ENCODE measurements at regions of chr6 and their contacts with region 1.

Region 1: GRCh38 chr6:16514249-16514648 is 247.0 kb downstream of the ATXN1 start:
- DNase-seq: peak; percentile 41
- H3K4me3 Mint-ChIP-seq: no peak overlapping the region
- H3K27ac Mint-ChIP-seq: peak overlapping the region; percentile 24
- H3K4me1 Mint-ChIP-seq: peaks cover 78% of the 10 kb centered on the region
- H3K27me3 Mint-ChIP-seq: no peaks in the 10 kb centered on the region

Region 2: GRCh38 chr6:15642276-15642675 is 872.0 kb before region 1 on chr6:
- CTCF ChIA-PET with region 1: no interaction called
- POLR2A ChIA-PET with region 1: no interaction called
- DNase-seq: no peak
- H3K4me3 Mint-ChIP-seq: no peak overlapping the region
- H3K27ac Mint-ChIP-seq: no peak overlapping the region
- H3K4me1 Mint-ChIP-seq: peaks cover 10% of the 10 kb centered on the region
- H3K27me3 Mint-ChIP-seq: no peaks in the 10 kb centered on the region

Region 3: DNA sequence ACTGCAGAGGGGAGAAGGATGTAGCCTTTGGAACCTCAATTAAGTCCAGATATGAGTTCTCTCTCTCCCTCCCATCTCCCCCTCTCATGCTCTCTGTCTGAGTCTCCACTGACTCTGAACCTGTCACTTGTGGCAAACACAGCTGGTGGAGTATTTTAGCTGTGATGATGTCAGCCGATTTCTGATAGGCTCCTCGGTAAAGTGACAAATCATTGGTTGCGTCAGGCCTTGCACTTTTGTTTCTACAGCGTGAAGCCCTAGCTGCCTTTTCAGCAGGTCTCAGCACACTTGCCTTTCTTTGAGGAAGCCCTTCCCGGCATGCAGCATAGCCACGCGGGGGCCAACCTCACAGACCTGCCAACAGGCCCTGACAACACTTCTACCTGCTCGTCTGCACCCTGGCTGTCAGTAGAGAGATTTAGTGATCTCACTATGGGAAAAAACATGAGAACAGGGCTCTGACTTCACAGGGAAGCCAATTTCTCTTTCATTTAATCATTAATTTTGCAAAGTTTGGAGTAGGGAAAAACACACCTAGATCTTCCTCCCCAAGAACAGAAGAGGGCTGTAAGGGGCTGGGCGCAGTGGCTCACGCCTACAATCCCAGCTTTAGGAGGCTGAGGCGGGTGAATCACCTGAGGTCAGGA is 191.5 kb before region 1 on chr6:
- CTCF ChIA-PET with region 1: no interaction called
- POLR2A ChIA-PET with region 1: no interaction called
- DNase-seq: peak; percentile 84
- H3K4me3 Mint-ChIP-seq: peak overlapping the region; percentile 29
- H3K27ac Mint-ChIP-seq: peak overlapping the region; percentile 98
- H3K4me1 Mint-ChIP-seq: peaks cover 76% of the 10 kb centered on the region
- H3K27me3 Mint-ChIP-seq: no peaks in the 10 kb centered on the region

Region 4: GRCh38 chr6:16380220-16380809 is 133.9 kb before region 1 on chr6:
- CTCF ChIA-PET with region 1: no interaction called
- POLR2A ChIA-PET with region 1: no interaction called
- DNase-seq: no peak
- H3K4me3 Mint-ChIP-seq: no peak overlapping the region
- H3K27ac Mint-ChIP-seq: no peak overlapping the region
- H3K4me1 Mint-ChIP-seq: no peaks in the 10 kb centered on the region
- H3K27me3 Mint-ChIP-seq: no peaks in the 10 kb centered on the region

Region 5: DNA sequence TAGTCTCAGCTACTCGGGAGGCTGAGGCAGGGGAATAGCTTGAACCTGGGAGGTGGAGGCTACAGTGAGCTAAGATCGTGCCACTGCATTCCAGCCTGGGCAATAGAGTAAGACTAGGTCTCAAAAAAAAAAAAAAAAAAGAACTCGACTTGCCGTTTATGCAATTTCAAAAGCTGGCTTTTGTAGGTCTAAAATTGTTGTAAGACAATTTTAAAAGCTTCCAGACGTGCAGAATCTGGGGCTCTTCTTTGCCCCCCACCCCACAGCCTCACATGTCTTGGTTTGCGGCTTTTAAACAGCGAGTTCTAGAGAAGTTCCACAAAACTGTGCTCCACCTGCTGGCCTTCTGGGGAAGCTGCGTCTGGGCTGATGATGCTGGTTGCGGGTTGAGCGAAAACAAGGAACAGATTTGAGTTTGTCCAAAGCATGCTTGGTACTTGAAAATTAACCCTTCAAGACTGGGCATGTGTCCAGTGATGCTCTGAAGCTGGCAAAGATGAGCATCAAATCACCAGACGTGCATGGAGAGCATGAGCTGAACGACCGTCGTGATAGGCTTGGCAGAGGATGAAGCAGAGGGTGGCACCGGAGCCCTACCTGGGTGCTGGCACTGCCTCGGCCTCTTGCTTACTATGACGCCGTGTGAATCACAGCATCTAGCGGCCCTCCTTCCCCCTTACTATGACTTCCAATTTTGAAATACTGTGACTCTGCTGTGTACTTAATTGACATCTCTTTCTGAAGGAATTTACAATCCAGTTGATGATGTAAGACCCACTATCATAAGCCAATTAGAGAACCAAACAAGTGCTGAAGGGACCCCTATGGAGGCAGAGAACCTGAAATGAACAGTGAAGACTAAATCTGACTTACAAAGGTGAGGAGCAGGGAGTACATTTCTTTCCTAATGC is 104.5 kb before region 1 on chr6:
- CTCF ChIA-PET with region 1: interaction called, 12 read pairs
- POLR2A ChIA-PET with region 1: interaction called, 6 read pairs
- DNase-seq: peak; percentile 73
- H3K4me3 Mint-ChIP-seq: peak overlapping the region; percentile 63
- H3K27ac Mint-ChIP-seq: peak overlapping the region; percentile 73
- H3K4me1 Mint-ChIP-seq: peaks cover 65% of the 10 kb centered on the region
- H3K27me3 Mint-ChIP-seq: no peaks in the 10 kb centered on the region

Region 6: DNA sequence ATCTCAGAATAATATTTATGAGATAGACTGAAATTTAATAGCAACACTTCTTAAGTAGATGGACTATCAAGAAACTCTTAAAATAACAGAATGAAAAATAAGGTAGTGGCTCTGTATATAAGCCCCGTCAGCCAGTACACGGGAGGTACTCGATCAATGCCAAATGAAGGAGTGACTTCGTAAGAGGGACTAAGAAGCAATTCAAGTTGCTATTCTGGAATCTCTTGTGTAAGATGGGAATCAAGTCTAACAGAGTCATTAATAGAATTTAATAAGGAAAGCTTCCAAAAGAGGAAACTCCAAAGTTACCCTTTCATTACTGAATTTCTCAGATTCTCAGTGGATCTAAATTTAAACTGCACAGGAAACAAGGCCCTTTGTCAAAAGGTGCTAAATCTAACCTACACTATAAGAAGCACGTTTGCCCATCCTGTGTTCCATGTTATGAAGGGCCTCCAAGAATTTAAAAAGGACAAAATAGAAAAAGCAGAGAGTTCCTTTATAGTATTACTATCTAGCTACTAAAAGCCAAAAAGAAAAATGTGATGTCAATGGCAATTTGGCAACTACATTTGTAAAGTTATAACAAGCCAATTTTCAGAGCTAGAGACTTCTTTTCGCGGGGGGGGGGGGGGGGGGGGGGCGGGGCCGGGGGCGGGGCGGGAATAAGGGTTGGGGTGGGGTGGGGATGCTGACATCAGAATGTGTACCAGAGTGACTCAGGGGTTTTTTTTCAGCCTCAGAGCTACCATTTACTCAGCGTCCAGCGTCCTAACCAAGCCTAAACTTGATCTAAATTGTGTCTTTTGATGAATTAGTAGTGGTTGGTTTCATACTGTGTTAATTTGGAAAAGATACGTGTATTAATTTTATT is 75.3 kb before region 1 on chr6:
- CTCF ChIA-PET with region 1: interaction called, 25 read pairs
- POLR2A ChIA-PET with region 1: interaction called, 20 read pairs
- DNase-seq: peak; percentile 43
- H3K4me3 Mint-ChIP-seq: peak overlapping the region; percentile 90
- H3K27ac Mint-ChIP-seq: peak overlapping the region; percentile 94
- H3K4me1 Mint-ChIP-seq: peaks cover 73% of the 10 kb centered on the region
- H3K27me3 Mint-ChIP-seq: no peaks in the 10 kb centered on the region

Region 7: GRCh38 chr6:16461491-16461890 is 52.8 kb before region 1 on chr6:
- CTCF ChIA-PET with region 1: no interaction called
- POLR2A ChIA-PET with region 1: no interaction called
- DNase-seq: no peak
- H3K4me3 Mint-ChIP-seq: no peak overlapping the region
- H3K27ac Mint-ChIP-seq: no peak overlapping the region
- H3K4me1 Mint-ChIP-seq: peaks cover 10% of the 10 kb centered on the region
- H3K27me3 Mint-ChIP-seq: no peaks in the 10 kb centered on the region

Region 8: GRCh38 chr6:16487996-16488674 is 26.1 kb before region 1 on chr6:
- CTCF ChIA-PET with region 1: interaction called, 17 read pairs
- POLR2A ChIA-PET with region 1: interaction called, 18 read pairs
- DNase-seq: no peak
- H3K4me3 Mint-ChIP-seq: peak overlapping the region; percentile 27
- H3K27ac Mint-ChIP-seq: peak overlapping the region; percentile 94
- H3K4me1 Mint-ChIP-seq: peaks cover 82% of the 10 kb centered on the region
- H3K27me3 Mint-ChIP-seq: no peaks in the 10 kb centered on the region

Region 9: DNA sequence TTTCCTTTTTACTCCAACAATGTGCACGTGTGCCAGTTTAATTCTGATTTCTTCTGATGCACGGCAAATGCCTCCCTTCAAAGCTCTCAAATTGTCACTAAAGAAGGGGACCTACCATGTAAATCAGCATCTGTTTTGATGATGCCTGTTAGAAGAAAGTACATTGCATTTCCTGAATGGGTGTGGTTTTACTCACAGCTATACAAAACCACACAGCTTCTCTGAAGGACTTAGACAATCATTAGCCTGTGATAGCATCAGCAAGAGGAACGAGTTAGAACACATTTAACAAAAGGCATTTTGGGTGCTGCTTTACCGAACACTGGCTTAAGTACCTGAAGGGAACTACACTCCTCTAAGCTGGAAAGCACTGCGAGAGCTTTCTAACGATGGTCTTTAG is 137.6 kb after region 1 on chr6:
- CTCF ChIA-PET with region 1: interaction called, 12 read pairs
- POLR2A ChIA-PET with region 1: interaction called, 4 read pairs
- DNase-seq: peak; percentile 29
- H3K4me3 Mint-ChIP-seq: peak overlapping the region; percentile 52
- H3K27ac Mint-ChIP-seq: peak overlapping the region; percentile 88
- H3K4me1 Mint-ChIP-seq: peaks cover 65% of the 10 kb centered on the region
- H3K27me3 Mint-ChIP-seq: no peaks in the 10 kb centered on the region

Region 10: GRCh38 chr6:16712931-16713484 is 198.8 kb after region 1 on chr6:
- CTCF ChIA-PET with region 1: interaction called, 13 read pairs
- POLR2A ChIA-PET with region 1: interaction called, 4 read pairs
- DNase-seq: no peak
- H3K4me3 Mint-ChIP-seq: peak overlapping the region; percentile 66
- H3K27ac Mint-ChIP-seq: peak overlapping the region; percentile 97
- H3K4me1 Mint-ChIP-seq: peaks cover 70% of the 10 kb centered on the region
- H3K27me3 Mint-ChIP-seq: no peaks in the 10 kb centered on the region

Measured in activated CD4-positive, alpha-beta memory T cell treated with anti-CD3 and anti-CD28 coated beads, Interleukin-2, amount 10 ng/mL, durations not matched to agents 7 days and 5 days (primary cell).